ENCODE measurements at regions of chrX and their contacts with region 1.

Region 1: DNA sequence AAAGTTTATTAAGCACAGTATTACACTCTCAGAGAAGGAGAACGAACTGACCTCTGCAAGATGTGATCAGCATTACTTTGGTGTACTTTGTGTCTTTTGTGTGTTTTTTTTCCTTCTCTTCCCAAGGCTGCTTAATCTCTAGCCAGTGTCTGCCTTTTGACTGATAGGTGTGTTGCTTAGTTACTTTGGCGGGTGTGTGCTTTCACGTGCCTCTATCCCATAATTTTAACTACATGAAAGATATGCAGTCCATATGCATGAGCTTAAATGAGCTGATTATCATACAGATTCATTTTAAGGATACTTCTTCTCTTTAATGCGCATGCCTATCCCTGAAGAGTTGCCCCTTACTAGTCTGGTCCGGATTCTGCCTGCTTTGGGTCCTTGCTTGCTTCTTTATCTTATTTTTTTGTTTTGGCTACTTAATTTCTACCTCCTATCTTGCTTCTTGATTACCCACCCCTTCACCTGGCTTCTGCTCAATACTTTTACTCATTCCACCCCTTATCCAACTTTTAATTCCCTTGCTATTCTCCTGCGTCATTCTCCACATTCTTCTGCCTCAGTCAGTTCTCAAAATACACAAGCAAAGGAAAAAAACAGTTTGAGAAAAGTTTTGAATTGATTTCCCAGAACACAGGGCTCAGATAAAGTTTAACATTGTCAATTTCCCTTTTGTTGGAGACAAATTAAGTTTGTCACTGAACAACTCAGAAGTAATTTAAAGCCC is 182.0 kb downstream of the TENT5D start:
- DNase-seq: no peak
- ATAC-seq: no peak
- H3K4me3 ChIP-seq: no peak overlapping the region
- H3K27ac ChIP-seq: no peak overlapping the region
- H3K4me1 ChIP-seq: no peaks in the 10 kb centered on the region
- H3K27me3 ChIP-seq: no peaks in the 10 kb centered on the region
- CTCF ChIP-seq: no peak
- POLR2A ChIP-seq: no peak

Region 2: GRCh38 chrX:80550722-80551121 is 51.5 kb before region 1 on chrX:
- intact Hi-C with region 1: loop called in 1 of 10 experiments (anchors 10 kb)
- DNase-seq: no peak
- ATAC-seq: no peak
- H3K4me3 ChIP-seq: no peak overlapping the region
- H3K27ac ChIP-seq: no peak overlapping the region
- H3K4me1 ChIP-seq: no peaks in the 10 kb centered on the region
- H3K27me3 ChIP-seq: peaks cover 0 to 6% (median 0%) of the 10 kb centered on the region in 9 donors
- CTCF ChIP-seq: no peak
- POLR2A ChIP-seq: no peak

Region 3: GRCh38 chrX:81280148-81280547 is 677.9 kb after region 1 on chrX:
- intact Hi-C with region 1: no loop called
- DNase-seq: no peak
- ATAC-seq: no peak
- H3K4me3 ChIP-seq: no peak overlapping the region
- H3K27ac ChIP-seq: no peak overlapping the region
- H3K4me1 ChIP-seq: no peaks in the 10 kb centered on the region
- H3K27me3 ChIP-seq: peaks cover 0 to 5% (median 0%) of the 10 kb centered on the region in 9 donors
- CTCF ChIP-seq: no peak
- POLR2A ChIP-seq: no peak